Tibial artery (tissue), 4 donors: ENCODE measurements at regions of chr14 and their contacts with region 1.

Region 1: GRCh38 chr14:58072288-58073071 is 79.5 kb downstream of the ARMH4 start:
- DNase-seq: peak; percentile 22 to 69
- H3K4me3 ChIP-seq: peak overlapping the region in 1 of 2 donors; percentile 19
- H3K27ac ChIP-seq: no peak overlapping the region
- H3K4me1 ChIP-seq: peaks cover 0 to 18% (median 3%) of the 10 kb centered on the region in 4 donors
- H3K27me3 ChIP-seq: no peaks in the 10 kb centered on the region
- CTCF ChIP-seq: peak; percentile 60 to 79

Region 2: DNA sequence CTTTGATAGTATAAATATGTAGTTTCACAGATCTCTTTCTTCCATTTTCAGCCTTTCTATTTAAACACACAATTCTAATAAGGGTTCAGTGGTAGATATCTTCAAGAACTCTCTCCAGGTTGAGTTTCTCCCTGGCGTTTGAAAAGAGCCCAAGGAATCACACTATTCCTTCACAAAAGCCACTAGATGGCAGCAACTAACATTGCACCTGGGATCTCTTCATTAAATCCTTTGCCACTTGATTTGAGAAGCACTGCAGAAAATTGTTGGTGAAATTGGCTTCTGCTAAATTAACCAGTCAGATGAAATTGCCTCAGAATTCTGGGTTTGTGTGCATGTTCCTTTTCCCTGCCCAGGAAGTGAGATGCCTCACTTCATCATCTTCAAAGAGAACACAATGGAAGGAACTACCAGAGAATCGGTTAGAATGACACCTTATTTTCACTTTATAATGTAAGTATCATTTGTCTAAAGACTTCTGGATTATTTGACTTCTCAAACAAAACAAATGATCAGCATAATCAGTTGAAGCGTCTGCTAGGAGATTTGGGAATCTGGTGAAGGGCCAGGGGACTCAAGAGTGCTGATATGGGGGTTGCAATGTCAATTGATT is 585.6 kb before region 1 on chr14:
- intact Hi-C with region 1: loop called (anchors 5 kb)
- DNase-seq: no peak
- H3K4me3 ChIP-seq: no peak overlapping the region
- H3K27ac ChIP-seq: no peak overlapping the region
- H3K4me1 ChIP-seq: no peaks in the 10 kb centered on the region
- H3K27me3 ChIP-seq: no peaks in the 10 kb centered on the region
- CTCF ChIP-seq: peak; percentile 52 to 56

Region 3: GRCh38 chr14:58131386-58131785 is 58.9 kb after region 1 on chr14:
- intact Hi-C with region 1: no loop called
- DNase-seq: no peak
- H3K4me3 ChIP-seq: no peak overlapping the region
- H3K27ac ChIP-seq: no peak overlapping the region
- H3K4me1 ChIP-seq: peaks cover 0 to 21% (median 7%) of the 10 kb centered on the region in 4 donors
- H3K27me3 ChIP-seq: no peaks in the 10 kb centered on the region
- CTCF ChIP-seq: no peak